ENCODE measurements at regions of chr6 and their contacts with region 1.

Region 1: GRCh38 chr6:109382576-109383437 is 540 bp upstream of the CD164 start:
- DNase-seq: peak; percentile 85 to 97 (median 91)
- ATAC-seq: peak; percentile 71
- H3K4me3 ChIP-seq: peak overlapping the region; percentile 81
- H3K4me3 Mint-ChIP-seq: peak overlapping the region; percentile 97
- H3K27ac ChIP-seq: peak overlapping the region; percentile 96 to 99
- H3K27ac Mint-ChIP-seq: peak overlapping the region; percentile 93
- H3K4me1 ChIP-seq: peaks cover 23% of the 10 kb centered on the region
- H3K4me1 Mint-ChIP-seq: peaks cover 57% of the 10 kb centered on the region
- H3K27me3 ChIP-seq: no peaks in the 10 kb centered on the region
- H3K27me3 Mint-ChIP-seq: no peaks in the 10 kb centered on the region
- CTCF ChIP-seq: peak; percentile 84

Region 2: GRCh38 chr6:107957909-107958688 is 1424.7 kb before region 1 on chr6 and contains the start of gene SEC63:
- CTCF ChIA-PET with region 1: no interaction called
- POLR2A ChIA-PET with region 1: no interaction called
- intact Hi-C with region 1: loop called in 1 of 2 experiments (anchors 5 kb)
- DNase-seq: peak; percentile 94 to 98 (median 97)
- ATAC-seq: peak; percentile 97
- H3K4me3 ChIP-seq: peak within 1 kb of the TSS; percentile 81
- H3K4me3 Mint-ChIP-seq: peak within 1 kb of the TSS; percentile 99
- H3K27ac ChIP-seq: peak within 1 kb of the TSS; percentile 46 to 61
- H3K27ac Mint-ChIP-seq: peak within 1 kb of the TSS; percentile 82
- H3K4me1 ChIP-seq: peaks cover 16% of the 10 kb centered on the region
- H3K4me1 Mint-ChIP-seq: peaks cover 32% of the 10 kb centered on the region
- H3K27me3 ChIP-seq: no peaks in the 10 kb centered on the region
- H3K27me3 Mint-ChIP-seq: no peaks in the 10 kb centered on the region
- CTCF ChIP-seq: no peak
- total RNA-seq, gene SEC63: 80.3 to 86.7 TPM

Region 3: DNA sequence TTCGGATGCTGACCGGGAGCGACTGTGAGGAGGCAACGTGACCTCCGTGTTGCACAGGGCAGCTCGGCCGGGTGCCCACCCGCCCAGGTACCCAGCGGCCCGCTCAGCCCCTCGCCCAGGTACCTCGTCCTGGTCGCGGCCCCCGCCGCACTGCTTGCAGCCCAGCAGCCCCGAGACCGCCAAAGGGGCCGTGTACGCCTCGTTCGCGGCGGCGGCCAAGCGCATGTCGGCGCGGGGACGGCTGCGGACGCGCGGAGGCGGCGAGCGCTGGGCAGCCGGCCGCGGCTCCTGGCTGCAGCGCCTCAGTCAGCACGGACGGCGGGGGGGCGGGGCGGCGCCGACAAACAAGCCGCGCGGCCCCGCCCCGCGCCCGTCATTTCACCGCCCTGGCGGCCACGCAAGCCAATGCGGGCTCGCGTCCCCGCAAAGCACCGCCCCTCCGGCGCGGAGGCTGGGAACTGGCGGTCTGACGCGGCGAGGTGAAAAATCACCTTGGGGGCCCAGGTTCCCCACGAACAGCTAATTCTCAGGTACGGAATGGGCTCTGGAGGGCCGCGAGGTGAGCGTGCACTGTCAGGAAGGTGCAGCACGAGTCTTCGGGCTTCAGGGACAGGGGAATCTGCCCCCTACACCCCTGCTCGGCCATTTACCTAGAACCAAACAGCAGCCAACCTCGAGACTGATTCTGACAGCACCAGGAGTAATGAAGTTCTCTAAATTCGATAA is 373.4 kb before region 1 on chr6:
- CTCF ChIA-PET with region 1: no interaction called
- POLR2A ChIA-PET with region 1: no interaction called
- intact Hi-C with region 1: loop called (anchors 5 to 10 kb)
- DNase-seq: peak; percentile 81 to 97 (median 90)
- ATAC-seq: peak; percentile 94
- H3K4me3 ChIP-seq: peak overlapping the region; percentile 93
- H3K4me3 Mint-ChIP-seq: peak overlapping the region; percentile 100
- H3K27ac ChIP-seq: peak overlapping the region; percentile 84 to 92
- H3K27ac Mint-ChIP-seq: peak overlapping the region; percentile 99
- H3K4me1 ChIP-seq: peaks cover 18% of the 10 kb centered on the region
- H3K4me1 Mint-ChIP-seq: peaks cover 73% of the 10 kb centered on the region
- H3K27me3 ChIP-seq: no peaks in the 10 kb centered on the region
- H3K27me3 Mint-ChIP-seq: no peaks in the 10 kb centered on the region
- CTCF ChIP-seq: peak; percentile 14

Region 4: DNA sequence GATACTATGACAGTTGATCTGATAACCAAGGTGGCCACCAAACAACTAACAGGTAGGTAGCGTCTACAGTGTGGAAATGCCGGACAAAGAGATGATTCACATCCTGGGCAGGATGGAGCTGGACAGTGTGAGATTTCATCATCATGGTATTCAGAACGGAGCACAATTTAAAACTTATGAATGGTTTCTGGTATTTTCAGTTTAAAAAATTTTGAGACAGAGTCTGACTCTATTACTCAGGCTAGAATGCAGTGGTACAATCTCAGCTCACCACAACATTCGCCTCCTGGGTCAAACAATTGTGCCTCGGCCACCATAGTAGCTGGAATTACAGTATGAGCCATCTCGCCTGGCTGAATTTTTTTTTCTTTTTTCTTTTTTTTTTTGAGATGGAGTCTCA is 243.7 kb before region 1 on chr6:
- CTCF ChIA-PET with region 1: no interaction called
- POLR2A ChIA-PET with region 1: no interaction called
- intact Hi-C with region 1: no loop called
- DNase-seq: no peak
- ATAC-seq: no peak
- H3K4me3 ChIP-seq: no peak overlapping the region
- H3K4me3 Mint-ChIP-seq: no peak overlapping the region
- H3K27ac ChIP-seq: no peak overlapping the region
- H3K27ac Mint-ChIP-seq: no peak overlapping the region
- H3K4me1 ChIP-seq: no peaks in the 10 kb centered on the region
- H3K4me1 Mint-ChIP-seq: no peaks in the 10 kb centered on the region
- H3K27me3 ChIP-seq: no peaks in the 10 kb centered on the region
- H3K27me3 Mint-ChIP-seq: no peaks in the 10 kb centered on the region
- CTCF ChIP-seq: no peak

Region 5: GRCh38 chr6:109362102-109362884 is 20.5 kb before region 1 on chr6:
- CTCF ChIA-PET with region 1: interaction called, 4 read pairs
- POLR2A ChIA-PET with region 1: interaction called, 18 read pairs
- intact Hi-C with region 1: no loop called
- DNase-seq: no peak
- ATAC-seq: no peak
- H3K4me3 ChIP-seq: no peak overlapping the region
- H3K4me3 Mint-ChIP-seq: no peak overlapping the region
- H3K27ac ChIP-seq: no peak overlapping the region
- H3K27ac Mint-ChIP-seq: no peak overlapping the region
- H3K4me1 ChIP-seq: no peaks in the 10 kb centered on the region
- H3K4me1 Mint-ChIP-seq: peaks cover 27% of the 10 kb centered on the region
- H3K27me3 ChIP-seq: no peaks in the 10 kb centered on the region
- H3K27me3 Mint-ChIP-seq: no peaks in the 10 kb centered on the region
- CTCF ChIP-seq: no peak

Region 6: GRCh38 chr6:109455502-109456282 is 72.9 kb after region 1 on chr6 and contains the start of gene MICAL1:
- CTCF ChIA-PET with region 1: interaction called, 12 read pairs
- POLR2A ChIA-PET with region 1: interaction called, 52 read pairs
- intact Hi-C with region 1: loop called (anchors 1 to 2 kb)
- DNase-seq: peak; percentile 45 to 92 (median 70)
- ATAC-seq: peak; percentile 58
- H3K4me3 ChIP-seq: peak within 1 kb of the TSS; percentile 97
- H3K4me3 Mint-ChIP-seq: peak within 1 kb of the TSS; percentile 99
- H3K27ac ChIP-seq: peak within 1 kb of the TSS; percentile 91 to 94
- H3K27ac Mint-ChIP-seq: peak within 1 kb of the TSS; percentile 95
- H3K4me1 ChIP-seq: peaks cover 74% of the 10 kb centered on the region
- H3K4me1 Mint-ChIP-seq: peaks cover 66% of the 10 kb centered on the region
- H3K27me3 ChIP-seq: no peaks in the 10 kb centered on the region
- H3K27me3 Mint-ChIP-seq: no peaks in the 10 kb centered on the region
- CTCF ChIP-seq: no peak
- total RNA-seq, gene MICAL1: 106 to 107 TPM

Region 7: GRCh38 chr6:109690737-109691621 is 308.2 kb after region 1 on chr6 and contains the starts of genes AK9 and FIG4:
- CTCF ChIA-PET with region 1: interaction called, 7 read pairs
- POLR2A ChIA-PET with region 1: interaction called, 23 read pairs
- intact Hi-C with region 1: loop called (anchors 2 to 5 kb)
- DNase-seq: peak; percentile 76 to 94 (median 88)
- ATAC-seq: peak; percentile 96
- H3K4me3 ChIP-seq: peak within 1 kb of the TSS; percentile 88
- H3K4me3 Mint-ChIP-seq: peak within 1 kb of the TSS; percentile 96
- H3K27ac ChIP-seq: peak within 1 kb of the TSS; percentile 59 to 71
- H3K27ac Mint-ChIP-seq: peak within 1 kb of the TSS; percentile 95
- H3K4me1 ChIP-seq: peaks cover 13% of the 10 kb centered on the region
- H3K4me1 Mint-ChIP-seq: peaks cover 34% of the 10 kb centered on the region
- H3K27me3 ChIP-seq: no peaks in the 10 kb centered on the region
- H3K27me3 Mint-ChIP-seq: no peaks in the 10 kb centered on the region
- CTCF ChIP-seq: peak; percentile 27
- total RNA-seq, gene AK9: 5.3 to 6.6 TPM
- total RNA-seq, gene FIG4: 3.3 to 4.0 TPM

Region 8: GRCh38 chr6:110325197-110325596 is 942.4 kb after region 1 on chr6:
- CTCF ChIA-PET with region 1: no interaction called
- POLR2A ChIA-PET with region 1: no interaction called
- intact Hi-C with region 1: no loop called
- DNase-seq: no peak
- ATAC-seq: no peak
- H3K4me3 ChIP-seq: no peak overlapping the region
- H3K4me3 Mint-ChIP-seq: no peak overlapping the region
- H3K27ac ChIP-seq: no peak overlapping the region
- H3K27ac Mint-ChIP-seq: no peak overlapping the region
- H3K4me1 ChIP-seq: no peaks in the 10 kb centered on the region
- H3K4me1 Mint-ChIP-seq: no peaks in the 10 kb centered on the region
- H3K27me3 ChIP-seq: peaks cover 0 to 2% of the 10 kb centered on the region in 2 experiments
- H3K27me3 Mint-ChIP-seq: no peaks in the 10 kb centered on the region
- CTCF ChIP-seq: no peak

Region 9: GRCh38 chr6:110873981-110874879 is 1491.4 kb after region 1 on chr6 and contains the start of gene AMD1:
- CTCF ChIA-PET with region 1: no interaction called
- POLR2A ChIA-PET with region 1: interaction called, 15 read pairs
- intact Hi-C with region 1: no loop called
- DNase-seq: peak; percentile 91 to 98 (median 94)
- ATAC-seq: peak; percentile 75
- H3K4me3 ChIP-seq: peak within 1 kb of the TSS; percentile 78
- H3K4me3 Mint-ChIP-seq: peak within 1 kb of the TSS; percentile 96
- H3K27ac ChIP-seq: peak within 1 kb of the TSS; percentile 82 to 91
- H3K27ac Mint-ChIP-seq: peak within 1 kb of the TSS; percentile 99
- H3K4me1 ChIP-seq: peaks cover 17% of the 10 kb centered on the region
- H3K4me1 Mint-ChIP-seq: peaks cover 37% of the 10 kb centered on the region
- H3K27me3 ChIP-seq: no peaks in the 10 kb centered on the region
- H3K27me3 Mint-ChIP-seq: no peaks in the 10 kb centered on the region
- CTCF ChIP-seq: no peak
- total RNA-seq, gene AMD1: 165 to 174 TPM

Measured in CD4-positive, alpha-beta T cell (primary cell).